H1 (cell line): ENCODE measurements at regions of chr6 and their contacts with region 1.

Region 1: GRCh38 chr6:2448820-2449571 is 203.6 kb upstream of the GMDS start:
- DNase-seq: no peak
- H3K4me3 ChIP-seq: peak overlapping the region; percentile 11 to 47 (median 23); a peak in 5 of 8 replicates
- H3K27ac ChIP-seq: no peak overlapping the region
- H3K4me1 ChIP-seq: no peaks in the 10 kb centered on the region
- H3K27me3 ChIP-seq: peaks cover 0 to 7% (median 2%) of the 10 kb centered on the region in 4 experiments; a peak in 5 of 7 replicates
- CTCF ChIP-seq: peak; percentile 40 to 93 (median 76)
- EP300 ChIP-seq: no peak
- POLR2A ChIP-seq: no peak
- RAD21 ChIP-seq: peak; percentile 95 to 96

Region 2: DNA sequence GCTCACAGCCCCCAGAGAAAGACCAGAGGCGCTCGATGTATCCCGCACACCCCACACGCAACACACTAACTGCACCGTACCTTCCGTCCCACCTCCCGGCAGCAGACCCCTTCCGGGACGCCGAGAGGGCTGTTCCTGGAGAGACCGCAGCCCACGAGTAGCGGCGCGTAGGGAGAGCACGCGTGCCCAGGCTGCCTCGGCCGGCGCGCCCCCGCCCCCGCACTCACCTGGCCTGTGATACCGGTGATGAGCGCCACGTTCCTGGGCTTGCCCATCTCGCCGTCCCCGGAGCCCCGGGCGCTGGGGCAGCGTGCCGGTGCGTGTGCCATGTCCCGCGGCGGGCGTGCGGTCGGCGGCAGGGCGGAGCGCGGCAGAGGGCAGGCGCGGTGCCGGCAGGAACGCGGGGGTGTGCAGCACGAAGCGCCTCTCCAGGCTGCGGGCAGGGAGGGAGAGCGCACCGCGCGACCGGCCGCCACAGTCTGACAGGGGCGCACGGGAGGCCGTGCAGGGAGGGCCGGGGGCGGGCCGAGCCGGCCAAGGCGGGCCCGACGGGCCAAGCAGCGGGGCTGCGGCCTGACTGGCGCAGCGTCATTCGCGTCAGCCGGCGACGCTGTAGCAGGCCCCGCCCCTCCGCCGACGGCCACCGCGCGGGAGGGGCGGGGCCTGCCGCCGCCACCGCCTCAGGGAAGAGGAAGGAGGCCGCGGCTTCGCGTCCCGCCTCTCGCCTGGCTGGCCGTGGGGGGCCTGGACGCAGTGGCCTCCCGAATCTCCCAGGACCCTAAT is 203.7 kb before region 1 on chr6 and contains the start of gene GMDS:
- CTCF ChIA-PET with region 1: no interaction called
- POLR2A ChIA-PET with region 1: no interaction called
- DNase-seq: peak; percentile 67 to 87
- H3K4me3 ChIP-seq: peak within 1 kb of the TSS; percentile 78 to 90 (median 80)
- H3K27ac ChIP-seq: peak within 1 kb of the TSS; percentile 0; the same call in 1 of the 2 replicates
- H3K4me1 ChIP-seq: peaks cover 5 to 22% (median 10%) of the 10 kb centered on the region in 4 experiments
- H3K27me3 ChIP-seq: no peaks in the 10 kb centered on the region
- CTCF ChIP-seq: no peak
- EP300 ChIP-seq: peak in 1 of 2 experiments; percentile 57; a peak in 1 of 3 replicates
- POLR2A ChIP-seq: no peak; a peak in 1 of 3 replicates
- RAD21 ChIP-seq: no peak
- total RNA-seq, gene GMDS: 47.6 and 50.0 TPM in 2 replicates

Region 3: DNA sequence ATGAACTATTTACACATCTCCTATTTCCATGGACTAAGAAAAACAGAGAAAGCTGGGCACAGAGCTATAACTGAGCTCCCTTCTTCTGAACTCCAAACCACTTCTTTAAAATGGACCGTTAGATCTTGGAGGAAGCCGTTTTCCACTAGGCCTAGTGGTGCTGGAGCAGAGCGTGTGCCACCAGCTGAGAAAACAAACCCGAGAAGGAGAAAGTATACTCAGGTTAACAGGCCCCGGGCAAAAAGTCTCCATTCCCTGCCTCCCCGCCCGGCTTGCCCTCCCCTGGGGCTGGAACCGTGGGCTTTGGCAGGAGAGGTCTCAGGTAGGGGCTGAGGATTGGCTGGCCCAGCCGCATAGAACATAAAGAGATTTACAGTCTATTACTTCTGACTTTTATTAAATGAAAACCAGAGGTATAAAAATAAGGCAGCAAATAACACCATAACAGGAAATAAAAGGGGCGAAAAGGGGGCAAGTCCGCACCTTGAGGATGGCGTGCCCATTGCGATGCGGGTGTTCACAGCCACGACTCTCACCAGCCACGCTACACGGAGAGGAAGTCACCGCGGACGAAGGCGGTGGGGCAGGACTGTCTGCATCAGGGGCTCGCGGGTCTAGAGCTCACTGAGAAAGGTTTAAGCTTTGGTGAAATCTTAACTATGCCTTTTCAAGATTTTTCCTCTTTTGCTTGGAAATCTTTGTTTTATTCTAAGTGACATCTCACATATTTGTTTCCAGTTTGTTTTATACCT is 12.4 kb before region 1 on chr6:
- CTCF ChIA-PET with region 1: interaction called, 39 read pairs
- POLR2A ChIA-PET with region 1: no interaction called
- DNase-seq: no peak
- H3K4me3 ChIP-seq: no peak overlapping the region
- H3K27ac ChIP-seq: no peak overlapping the region
- H3K4me1 ChIP-seq: peaks cover 0 to 2% (median 0%) of the 10 kb centered on the region in 4 experiments; a peak in 1 of 7 replicates
- H3K27me3 ChIP-seq: no peaks in the 10 kb centered on the region
- CTCF ChIP-seq: no peak
- EP300 ChIP-seq: no peak
- POLR2A ChIP-seq: no peak
- RAD21 ChIP-seq: no peak

Region 4: DNA sequence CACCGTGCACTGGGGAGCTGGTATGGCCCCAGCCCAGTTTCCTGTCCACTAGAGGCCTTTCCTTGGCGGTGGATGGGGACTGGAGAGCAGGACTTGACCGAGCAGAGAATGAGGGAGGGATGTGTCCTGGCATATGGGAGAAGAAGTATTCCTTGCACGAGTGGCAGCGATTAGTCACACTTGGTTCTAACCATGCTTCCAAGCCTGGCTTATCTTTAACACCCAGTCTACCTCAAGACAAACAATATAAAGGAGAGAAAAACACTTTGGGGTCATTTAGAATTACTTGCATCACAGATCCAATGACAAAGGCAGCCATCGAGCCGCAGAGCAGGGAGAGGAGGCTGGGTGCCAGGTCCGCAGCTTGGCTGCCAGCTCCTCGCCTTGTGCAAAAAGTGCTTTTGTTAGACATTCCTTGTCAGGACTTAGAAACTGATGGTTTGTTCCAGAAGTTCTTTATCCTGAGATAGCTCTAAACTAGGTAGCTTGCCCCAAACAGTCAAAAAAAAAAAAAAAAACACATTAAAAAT is 11.3 kb after region 1 on chr6:
- CTCF ChIA-PET with region 1: interaction called, 15 read pairs
- POLR2A ChIA-PET with region 1: no interaction called
- DNase-seq: no peak
- H3K4me3 ChIP-seq: no peak overlapping the region
- H3K27ac ChIP-seq: no peak overlapping the region
- H3K4me1 ChIP-seq: no peaks in the 10 kb centered on the region
- H3K27me3 ChIP-seq: no peaks in the 10 kb centered on the region
- CTCF ChIP-seq: no peak
- EP300 ChIP-seq: no peak
- POLR2A ChIP-seq: no peak
- RAD21 ChIP-seq: no peak

Region 5: DNA sequence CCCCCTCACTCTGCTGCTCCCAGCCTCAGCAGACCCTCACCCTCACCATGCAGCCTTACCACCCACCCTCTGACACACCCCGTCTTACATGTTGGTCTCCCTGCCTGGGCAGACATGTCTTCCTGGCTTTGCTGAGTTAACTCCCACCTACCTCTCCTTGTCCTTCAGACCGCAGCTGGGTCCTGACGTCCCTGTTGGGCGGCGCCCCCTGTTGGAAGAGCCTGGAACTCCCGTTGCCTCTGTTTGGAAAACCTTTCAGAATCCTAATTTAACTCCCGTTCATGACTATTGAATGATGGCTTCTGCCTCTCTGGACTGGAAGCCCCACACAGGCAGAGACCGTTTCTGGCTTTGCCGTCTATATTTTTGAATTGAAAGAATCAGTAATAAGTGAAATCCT is 56.6 kb after region 1 on chr6:
- CTCF ChIA-PET with region 1: no interaction called
- POLR2A ChIA-PET with region 1: no interaction called
- DNase-seq: peak in 1 of 2 experiments; percentile 91
- H3K4me3 ChIP-seq: no peak overlapping the region
- H3K27ac ChIP-seq: no peak overlapping the region
- H3K4me1 ChIP-seq: no peaks in the 10 kb centered on the region; a peak in 2 of 7 replicates
- H3K27me3 ChIP-seq: no peaks in the 10 kb centered on the region
- CTCF ChIP-seq: peak; percentile 65 to 92 (median 81)
- EP300 ChIP-seq: no peak
- POLR2A ChIP-seq: no peak
- RAD21 ChIP-seq: peak; percentile 60 to 73